H1 (cell line): ENCODE measurements at regions of chr19 and their contacts with region 1.

Region 1: GRCh38 chr19:7497292-7497691 is 8.5 kb upstream of the PEX11G start:
- DNase-seq: no peak
- H3K4me3 ChIP-seq: no peak overlapping the region
- H3K27ac ChIP-seq: no peak overlapping the region
- H3K4me1 ChIP-seq: 0 out of 7 replicates have a peak, but pooled peaks cover 0 to 6% (median 0%) of the 10 kb centered on the region in 4 experiments
- H3K27me3 ChIP-seq: peaks cover 1 to 25% (median 22%) of the 10 kb centered on the region in 4 experiments
- CTCF ChIP-seq: peak; percentile 41 to 68 (median 64)
- EP300 ChIP-seq: no peak
- POLR2A ChIP-seq: no peak
- RAD21 ChIP-seq: peak; percentile 27 to 50; a peak in 3 of 4 replicates

Region 2: DNA sequence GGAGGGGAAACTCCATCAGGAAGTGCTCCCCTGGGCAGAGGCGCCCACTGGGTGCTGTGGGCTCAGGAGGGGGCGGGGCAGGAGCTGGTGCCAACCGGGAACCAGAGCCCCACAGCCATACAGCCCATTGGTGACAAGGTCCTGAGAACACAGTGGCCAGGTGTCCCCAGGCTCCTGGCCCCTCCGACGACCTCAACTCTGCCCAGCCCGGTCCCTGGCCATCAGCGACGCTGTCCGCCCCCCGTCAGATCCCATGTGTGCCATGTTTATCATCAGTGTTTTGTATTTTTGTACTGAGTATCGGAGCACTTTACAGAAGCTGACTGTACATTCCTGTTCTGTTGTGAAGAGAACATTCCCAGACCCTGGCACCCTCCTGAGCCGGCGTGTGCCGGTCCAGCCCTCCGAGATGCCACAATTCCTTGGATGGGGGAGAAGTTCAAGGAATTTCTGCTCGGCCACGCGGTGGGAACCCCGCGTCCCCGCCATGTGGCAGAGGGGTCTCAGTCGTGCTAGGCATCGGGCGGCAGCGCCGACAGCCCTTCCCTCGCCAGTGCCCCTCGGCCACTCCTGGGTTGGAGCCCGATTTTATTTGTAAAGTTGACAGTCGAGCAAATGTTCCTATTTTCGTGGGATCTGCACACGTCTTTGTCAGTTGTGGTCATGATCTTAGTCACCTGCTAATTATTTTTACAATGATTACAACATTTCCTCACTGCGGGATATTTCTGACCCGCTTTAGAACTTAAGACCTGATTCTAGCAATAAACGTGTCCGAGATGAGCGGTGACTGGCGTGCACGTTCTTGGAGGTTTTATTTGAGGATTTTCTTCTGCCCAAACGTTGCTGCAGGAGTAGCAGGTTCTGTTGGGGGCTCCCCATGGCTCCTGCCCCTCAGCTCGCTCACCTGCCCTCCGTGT is 25.3 kb before region 1 on chr19:
- CTCF ChIA-PET with region 1: interaction called, 10 read pairs
- POLR2A ChIA-PET with region 1: interaction called, 3 read pairs
- DNase-seq: no peak
- H3K4me3 ChIP-seq: no peak overlapping the region
- H3K27ac ChIP-seq: no peak overlapping the region
- H3K4me1 ChIP-seq: no peaks in the 10 kb centered on the region
- H3K27me3 ChIP-seq: no peaks in the 10 kb centered on the region
- CTCF ChIP-seq: no peak
- EP300 ChIP-seq: no peak
- POLR2A ChIP-seq: no peak
- RAD21 ChIP-seq: no peak

Region 3: GRCh38 chr19:7483720-7484201 is 13.5 kb before region 1 on chr19:
- CTCF ChIA-PET with region 1: interaction called, 10 read pairs
- POLR2A ChIA-PET with region 1: interaction called, 6 read pairs
- DNase-seq: no peak
- H3K4me3 ChIP-seq: peak overlapping the region in 1 of 4 experiments; percentile 57; a peak in 1 of 8 replicates
- H3K27ac ChIP-seq: no peak overlapping the region
- H3K4me1 ChIP-seq: peaks cover 0 to 15% (median 12%) of the 10 kb centered on the region in 4 experiments; a peak in 6 of 7 replicates
- H3K27me3 ChIP-seq: peaks cover 0 to 2% (median 0%) of the 10 kb centered on the region in 4 experiments; a peak in 3 of 7 replicates
- CTCF ChIP-seq: no peak
- EP300 ChIP-seq: no peak
- POLR2A ChIP-seq: no peak
- RAD21 ChIP-seq: no peak

Region 4: DNA sequence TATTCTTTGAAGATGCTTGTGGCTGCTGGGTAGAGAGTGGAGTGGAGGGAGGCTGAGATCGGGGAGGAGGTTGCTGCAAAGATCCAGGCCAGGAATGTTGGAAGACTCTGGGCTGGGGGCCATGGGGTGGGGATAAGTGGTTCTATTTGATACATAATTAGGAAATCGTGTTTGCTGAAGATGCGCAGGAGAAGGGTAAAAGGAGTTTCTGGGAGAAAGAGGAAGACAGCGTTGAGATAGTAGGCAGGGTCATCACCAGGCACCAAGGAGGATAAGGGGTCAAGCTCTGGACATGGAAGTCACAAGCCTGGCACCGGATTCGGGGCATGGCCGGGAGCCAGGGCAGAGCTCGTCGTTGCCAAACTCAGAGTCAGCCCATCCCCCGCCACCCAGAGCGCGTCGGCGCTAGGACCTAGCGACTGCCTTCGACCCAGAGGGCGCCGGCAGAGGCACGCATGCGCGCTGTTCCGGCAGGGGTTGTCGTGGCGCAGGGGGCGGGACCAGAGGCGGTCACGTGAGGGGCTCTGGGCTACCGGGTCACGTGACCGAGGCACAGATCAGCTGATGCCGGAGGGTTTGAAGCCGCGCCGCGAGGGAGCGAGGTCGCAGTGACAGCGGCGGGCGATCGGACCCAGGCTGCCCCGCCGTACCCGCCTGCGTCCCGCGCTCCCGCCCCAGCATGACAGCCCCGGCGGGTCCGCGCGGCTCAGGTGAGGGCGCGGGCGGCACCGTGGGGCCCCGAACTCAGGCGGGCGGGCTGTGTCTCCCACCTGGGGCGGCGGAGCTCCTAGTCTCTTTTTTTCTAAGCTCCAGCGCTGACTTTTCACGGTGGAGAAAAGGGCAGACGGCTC is 25.0 kb after region 1 on chr19 and contains the start of gene MCOLN1:
- CTCF ChIA-PET with region 1: interaction called, 11 read pairs
- POLR2A ChIA-PET with region 1: interaction called, 5 read pairs
- DNase-seq: peak in 1 of 2 experiments; percentile 99
- H3K4me3 ChIP-seq: peak within 1 kb of the TSS; percentile 48 to 79 (median 72)
- H3K27ac ChIP-seq: no peak within 1 kb of the TSS
- H3K4me1 ChIP-seq: peaks cover 0 to 5% (median 1%) of the 10 kb centered on the region in 4 experiments; a peak in 1 of 7 replicates
- H3K27me3 ChIP-seq: no peaks in the 10 kb centered on the region
- CTCF ChIP-seq: no peak
- EP300 ChIP-seq: peak; percentile 58 to 78
- POLR2A ChIP-seq: peak in 1 of 2 experiments; percentile 48; a peak in 1 of 3 replicates
- RAD21 ChIP-seq: peak in 1 of 2 experiments; percentile 28; a peak in 2 of 4 replicates
- total RNA-seq, gene MCOLN1: 15.8 and 19.1 TPM in 2 replicates